ENCODE measurements at regions of chr9 and their contacts with region 1.

Region 1: DNA sequence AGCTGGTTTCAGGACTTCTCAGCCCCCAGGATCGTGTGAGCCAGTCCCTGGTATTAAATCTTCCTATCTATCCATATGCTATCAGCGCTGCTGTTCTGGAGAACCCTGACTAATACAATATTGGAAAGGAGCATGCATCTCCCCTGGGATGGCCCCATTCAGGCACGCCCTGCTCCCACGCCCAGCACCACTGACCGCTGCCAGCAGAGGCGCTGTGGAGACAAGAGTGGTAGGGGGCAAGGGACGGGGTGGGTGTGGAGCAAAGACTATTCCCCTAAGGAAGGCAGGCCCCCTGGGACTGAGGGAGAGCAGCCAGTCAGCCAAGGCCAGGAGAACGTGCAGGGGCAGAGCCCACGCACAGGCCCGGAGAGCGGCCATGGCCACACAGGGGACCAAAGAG is 116.0 kb downstream of the VAV2 start:
- DNase-seq: peak; percentile 90
- ATAC-seq: peak; percentile 91
- H3K4me3 Mint-ChIP-seq: no peak overlapping the region
- H3K27ac Mint-ChIP-seq: peak overlapping the region; percentile 90
- H3K4me1 Mint-ChIP-seq: peaks cover 12% of the 10 kb centered on the region
- H3K27me3 Mint-ChIP-seq: no peaks in the 10 kb centered on the region
- CTCF ChIP-seq: peak; percentile 56; the same call in 1 of the 2 replicates

Region 2: DNA sequence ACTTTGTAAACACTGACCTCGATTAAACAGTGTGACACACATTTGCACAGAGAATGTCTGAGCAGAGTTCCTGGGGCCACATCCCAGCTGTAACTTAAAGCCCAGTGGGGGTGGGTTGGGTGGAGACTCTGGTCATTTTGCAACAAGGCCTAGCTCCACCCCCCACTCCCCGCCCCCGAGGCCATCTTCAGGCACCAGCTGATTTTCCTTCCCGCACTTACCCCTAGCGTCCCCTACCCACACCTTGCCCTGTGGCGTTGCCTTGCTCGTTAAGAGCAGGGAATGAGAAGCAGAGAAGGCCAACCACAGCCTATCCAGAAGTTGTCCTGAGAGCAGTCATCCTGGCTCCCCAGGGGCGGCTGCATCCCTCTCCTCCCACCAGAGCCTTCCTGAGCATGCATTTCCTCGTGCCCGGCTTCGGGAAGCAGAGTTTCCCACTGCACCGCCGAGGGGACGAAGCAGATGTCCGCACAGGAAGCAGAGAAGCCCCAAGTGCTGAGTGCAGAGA is 36.3 kb before region 1 on chr9:
- CTCF ChIA-PET with region 1: interaction called, 12 read pairs
- POLR2A ChIA-PET with region 1: no interaction called
- DNase-seq: peak; percentile 62
- ATAC-seq: peak; percentile 73
- H3K4me3 Mint-ChIP-seq: peak overlapping the region; percentile 30
- H3K27ac Mint-ChIP-seq: peak overlapping the region; percentile 84
- H3K4me1 Mint-ChIP-seq: peaks cover 46% of the 10 kb centered on the region
- H3K27me3 Mint-ChIP-seq: no peaks in the 10 kb centered on the region
- CTCF ChIP-seq: no peak

Region 3: GRCh38 chr9:133864022-133864421 is 12.1 kb before region 1 on chr9:
- CTCF ChIA-PET with region 1: interaction called, 14 read pairs
- POLR2A ChIA-PET with region 1: no interaction called
- DNase-seq: no peak
- ATAC-seq: 0 out of 2 replicates have a peak, but pooled peaks have one; percentile 47
- H3K4me3 Mint-ChIP-seq: no peak overlapping the region
- H3K27ac Mint-ChIP-seq: peak overlapping the region; percentile 92
- H3K4me1 Mint-ChIP-seq: peaks cover 12% of the 10 kb centered on the region
- H3K27me3 Mint-ChIP-seq: no peaks in the 10 kb centered on the region
- CTCF ChIP-seq: no peak

Measured in WTC11 (cell line).